Right cardiac atrium (tissue), 5 donors: ENCODE measurements at regions of chr11 and their contacts with region 1.

Region 1: DNA sequence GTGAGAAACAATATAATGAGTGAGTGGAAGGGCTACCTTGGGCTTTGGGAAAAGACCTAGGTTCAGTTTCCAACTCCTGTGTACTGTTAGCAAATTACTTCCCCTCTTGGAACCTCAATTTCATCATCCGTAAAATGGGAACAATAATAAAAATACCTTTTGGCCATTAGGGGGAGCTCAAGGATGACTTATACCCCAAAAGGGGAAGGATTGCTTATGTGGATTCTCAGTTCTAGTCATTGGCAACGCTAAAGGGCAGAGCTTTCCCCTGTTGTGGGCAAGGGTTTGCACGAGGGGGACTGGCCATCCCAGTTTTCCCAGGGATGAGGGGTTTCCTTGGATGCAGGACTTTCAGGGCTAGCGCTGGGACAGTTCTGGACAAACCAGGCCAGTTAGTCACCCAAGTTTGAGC is 3.1 kb upstream of the COMMD9 start:
- DNase-seq: no peak
- ATAC-seq: peak in 1 of 2 donors; percentile 24
- H3K4me3 ChIP-seq: no peak overlapping the region
- H3K27ac ChIP-seq: no peak overlapping the region
- H3K4me1 ChIP-seq: no peaks in the 10 kb centered on the region
- H3K27me3 ChIP-seq: no peaks in the 10 kb centered on the region

Region 2: GRCh38 chr11:36431429-36432092 is 139.2 kb after region 1 on chr11:
- intact Hi-C with region 1: no loop called
- DNase-seq: peak in 1 of 3 donors; percentile 72
- ATAC-seq: peak; percentile 59 to 94
- H3K4me3 ChIP-seq: no peak overlapping the region
- H3K27ac ChIP-seq: no peak overlapping the region
- H3K4me1 ChIP-seq: no peaks in the 10 kb centered on the region
- H3K27me3 ChIP-seq: no peaks in the 10 kb centered on the region

Region 3: GRCh38 chr11:36478700-36479329 is 186.5 kb after region 1 on chr11:
- intact Hi-C with region 1: loop called in 3 of 4 experiments (anchors 5 to 10 kb)
- DNase-seq: no peak
- ATAC-seq: peak; percentile 55 to 61
- H3K4me3 ChIP-seq: no peak overlapping the region
- H3K27ac ChIP-seq: no peak overlapping the region
- H3K4me1 ChIP-seq: no peaks in the 10 kb centered on the region
- H3K27me3 ChIP-seq: no peaks in the 10 kb centered on the region

Region 4: GRCh38 chr11:36492724-36493304 is 200.5 kb after region 1 on chr11:
- intact Hi-C with region 1: loop called in 3 of 4 experiments (anchors 5 to 10 kb)
- DNase-seq: no peak
- ATAC-seq: peak in 1 of 2 donors; percentile 48
- H3K4me3 ChIP-seq: no peak overlapping the region
- H3K27ac ChIP-seq: no peak overlapping the region
- H3K4me1 ChIP-seq: no peaks in the 10 kb centered on the region
- H3K27me3 ChIP-seq: no peaks in the 10 kb centered on the region

Region 5: GRCh38 chr11:36564376-36565030 is 272.2 kb after region 1 on chr11:
- intact Hi-C with region 1: no loop called
- DNase-seq: peak in 2 of 3 donors; percentile 39 to 55
- ATAC-seq: peak; percentile 76 to 82
- H3K4me3 ChIP-seq: peak overlapping the region; percentile 51
- H3K27ac ChIP-seq: no peak overlapping the region
- H3K4me1 ChIP-seq: peaks cover 2% of the 10 kb centered on the region
- H3K27me3 ChIP-seq: no peaks in the 10 kb centered on the region